Cardiac septum (tissue), 1 donor: ENCODE measurements at regions of chr17 and their contacts with region 1.

Region 1: GRCh38 chr17:65055348-65056261 is 935 bp downstream of the GNA13 start:
- DNase-seq: peak; percentile 86

Region 2: GRCh38 chr17:64975329-64976087 is 80.1 kb before region 1 on chr17:
- intact Hi-C with region 1: loop called (anchors 1 kb)
- DNase-seq: peak; percentile 99

Region 3: GRCh38 chr17:65100316-65101140 is 44.9 kb after region 1 on chr17:
- intact Hi-C with region 1: loop called (anchors 5 kb)
- DNase-seq: peak; percentile 96